Astrocyte of the cerebellum (primary cell): ENCODE measurements at regions of chr6 and their contacts with region 1.

Region 1: DNA sequence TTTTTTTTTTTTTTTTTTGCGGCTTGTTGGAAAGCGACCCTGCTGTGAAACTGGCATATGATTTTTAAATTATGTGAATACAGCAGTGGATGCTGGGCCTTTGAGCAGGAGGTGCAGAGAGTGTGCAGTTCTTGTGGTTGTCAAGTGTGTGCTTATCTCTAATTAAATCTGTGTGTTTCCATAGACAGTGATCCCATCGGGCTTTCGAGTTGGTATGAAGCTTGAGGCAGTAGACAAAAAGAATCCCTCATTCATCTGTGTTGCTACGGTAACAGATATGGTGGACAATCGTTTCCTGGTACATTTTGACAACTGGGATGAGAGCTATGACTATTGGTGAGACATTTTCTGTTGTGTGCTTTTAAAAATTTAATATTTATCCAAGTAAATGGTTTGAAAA is 52.4 kb downstream of the L3MBTL3 start:
- DNase-seq: no peak
- H3K4me3 ChIP-seq: no peak overlapping the region
- CTCF ChIP-seq: no peak

Region 2: DNA sequence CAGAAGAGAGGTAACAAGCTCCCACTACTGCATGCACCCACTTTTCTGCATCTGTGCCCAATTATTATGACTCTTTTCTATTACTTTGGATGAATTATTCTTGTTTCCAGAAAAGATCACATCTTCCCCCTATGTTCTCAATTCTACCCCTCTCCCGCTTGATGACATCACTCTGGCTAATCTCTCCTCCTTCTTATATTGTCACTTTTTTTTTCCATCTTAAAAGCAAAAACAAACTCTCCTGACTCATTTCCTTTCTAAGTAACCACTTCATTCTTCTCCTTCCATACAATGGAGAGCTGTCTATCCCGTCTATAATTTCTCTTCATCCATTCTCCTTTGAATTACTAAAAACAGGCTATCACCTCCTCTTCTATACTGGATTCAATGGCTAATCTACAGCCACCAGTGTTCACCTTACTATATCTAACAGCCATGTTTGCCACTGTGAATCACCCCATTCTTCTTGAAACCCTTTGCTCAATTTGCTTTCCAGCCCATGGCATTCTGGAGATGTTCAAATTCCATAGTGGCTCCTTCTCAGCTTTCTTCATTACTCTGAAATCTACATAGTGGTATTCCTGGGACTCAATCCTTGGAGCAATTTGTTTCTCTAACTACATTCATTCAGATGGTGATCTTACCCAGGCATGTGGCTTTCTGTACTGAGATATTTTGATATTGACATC is 739.2 kb before region 1 on chr6:
- in situ Hi-C with region 1: no loop called
- DNase-seq: peak; percentile 15
- H3K4me3 ChIP-seq: no peak overlapping the region
- CTCF ChIP-seq: no peak

Region 3: GRCh38 chr6:130730600-130730999 is 659.8 kb after region 1 on chr6:
- in situ Hi-C with region 1: no loop called
- DNase-seq: no peak
- H3K4me3 ChIP-seq: no peak overlapping the region
- CTCF ChIP-seq: no peak

Region 4: DNA sequence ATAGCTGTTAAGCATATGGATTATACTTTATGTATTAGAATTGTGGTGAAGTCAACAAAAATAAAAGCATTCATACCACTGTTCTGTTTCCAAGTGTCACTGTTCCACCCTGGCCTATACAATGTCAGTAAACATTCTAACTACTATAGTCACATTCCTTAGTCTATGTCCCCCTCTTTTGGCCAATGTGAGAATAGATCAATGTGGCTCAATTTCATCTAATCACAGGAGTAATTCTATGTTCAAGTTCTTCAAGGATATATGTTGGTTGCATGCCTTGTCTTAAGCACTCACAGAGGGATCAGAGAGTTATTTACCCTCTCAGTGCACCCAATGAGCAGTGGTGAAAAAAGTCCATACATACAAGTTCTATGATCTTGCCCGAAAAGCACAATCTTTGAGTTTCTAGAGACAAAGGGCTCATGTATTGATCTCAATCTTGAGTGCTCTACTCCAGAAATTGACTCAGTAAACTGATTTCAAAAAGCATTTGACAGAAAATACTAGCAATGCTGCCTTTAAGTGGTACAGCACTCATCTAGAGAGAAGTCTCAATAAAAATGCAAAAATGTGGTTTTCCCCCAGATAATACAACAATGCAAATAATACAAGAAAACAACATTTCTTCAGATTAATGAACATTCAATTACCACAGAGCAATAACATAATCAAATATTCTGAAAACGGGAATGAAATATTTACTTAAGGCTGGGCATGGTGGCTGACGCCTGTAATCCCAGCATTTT is 773.0 kb after region 1 on chr6:
- in situ Hi-C with region 1: loop called (anchors 25 kb)
- DNase-seq: peak; percentile 48
- H3K4me3 ChIP-seq: no peak overlapping the region
- CTCF ChIP-seq: peak; percentile 52